Dendritic cell treated with granulocyte-macrophage colony-stimulating factor and Interleukin-4, amounts not matched to agents 40 ng/mL and 50 ng/mL, for 4 days (primary cell): ENCODE measurements at regions of chr18 and their contacts with region 1.

Region 1: GRCh38 chr18:50307738-50308470 is 20.4 kb upstream of the CXXC1 start:
- H3K4me3 Mint-ChIP-seq: peak overlapping the region; percentile 87
- H3K27ac Mint-ChIP-seq: peak overlapping the region; percentile 75
- H3K4me1 Mint-ChIP-seq: peaks cover 28% of the 10 kb centered on the region
- H3K27me3 Mint-ChIP-seq: peaks cover 9% of the 10 kb centered on the region

Region 2: GRCh38 chr18:50247561-50247960 is 60.3 kb before region 1 on chr18:
- intact Hi-C with region 1: no loop called
- H3K4me3 Mint-ChIP-seq: no peak overlapping the region
- H3K27ac Mint-ChIP-seq: no peak overlapping the region
- H3K4me1 Mint-ChIP-seq: no peaks in the 10 kb centered on the region
- H3K27me3 Mint-ChIP-seq: peaks cover 4% of the 10 kb centered on the region

Region 3: GRCh38 chr18:50297621-50298442 is 10.1 kb before region 1 on chr18:
- intact Hi-C with region 1: loop called (anchors 1 kb)
- H3K4me3 Mint-ChIP-seq: peak overlapping the region; percentile 55
- H3K27ac Mint-ChIP-seq: peak overlapping the region; percentile 81
- H3K4me1 Mint-ChIP-seq: peaks cover 14% of the 10 kb centered on the region
- H3K27me3 Mint-ChIP-seq: peaks cover 29% of the 10 kb centered on the region